Body of pancreas (tissue), 4 donors: ENCODE measurements at regions of chr15 and their contacts with region 1.

Region 1: DNA sequence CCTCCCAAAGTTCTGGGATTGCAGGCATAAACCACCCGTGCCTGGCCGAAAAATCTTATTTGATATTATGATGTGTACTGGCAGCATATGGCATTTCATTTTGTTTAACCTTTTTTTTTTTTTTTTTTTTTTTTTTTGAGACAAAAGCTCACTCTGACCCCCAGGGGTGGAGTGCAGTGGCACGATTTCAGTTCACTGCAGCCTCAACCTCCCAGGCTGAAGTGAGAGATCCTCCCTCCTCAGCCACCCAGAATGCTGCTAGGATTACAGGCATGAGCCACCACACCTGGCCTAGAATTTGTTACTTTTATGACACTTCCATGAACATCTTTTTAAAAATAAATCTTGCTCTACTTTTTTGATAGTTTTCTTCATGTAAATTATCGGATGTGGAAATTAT is 12.0 kb downstream of the TERB2 start:
- DNase-seq: no peak
- ATAC-seq: no peak
- H3K4me3 ChIP-seq: no peak overlapping the region
- H3K27ac ChIP-seq: no peak overlapping the region
- H3K4me1 ChIP-seq: no peaks in the 10 kb centered on the region
- H3K27me3 ChIP-seq: no peaks in the 10 kb centered on the region
- CTCF ChIP-seq: no peak
- POLR2A ChIP-seq: no peak

Region 2: GRCh38 chr15:43105077-43105736 is 1863.3 kb before region 1 on chr15:
- intact Hi-C with region 1: no loop called
- DNase-seq: peak; percentile 58 to 77 (median 73)
- ATAC-seq: peak; percentile 80
- H3K4me3 ChIP-seq: peak overlapping the region; percentile 42 to 58
- H3K27ac ChIP-seq: peak overlapping the region; percentile 82 to 88 (median 85)
- H3K4me1 ChIP-seq: peaks cover 25% of the 10 kb centered on the region
- H3K27me3 ChIP-seq: no peaks in the 10 kb centered on the region
- CTCF ChIP-seq: peak in 4 of 7 experiments; percentile 20 to 34 (median 30)
- POLR2A ChIP-seq: no peak

Region 3: DNA sequence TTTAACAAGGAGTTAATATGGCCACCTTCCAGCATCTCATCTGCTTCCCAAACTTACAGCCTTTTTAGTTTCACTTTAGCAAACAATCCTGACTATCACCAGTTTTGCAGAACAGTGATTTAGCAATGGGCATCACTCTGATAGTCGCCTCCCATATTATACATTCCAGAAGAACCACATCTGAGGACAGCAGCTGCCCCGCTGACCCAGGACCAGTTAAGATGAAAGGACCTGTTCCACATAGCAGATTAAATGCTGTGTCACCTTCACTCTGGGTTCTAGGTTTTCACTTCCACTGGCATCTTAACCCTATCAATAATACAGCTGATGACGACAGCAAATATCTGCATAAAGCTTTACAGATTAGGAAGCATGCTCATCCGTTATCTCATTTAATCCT is 132.4 kb before region 1 on chr15:
- intact Hi-C with region 1: no loop called
- DNase-seq: no peak
- ATAC-seq: no peak
- H3K4me3 ChIP-seq: no peak overlapping the region
- H3K27ac ChIP-seq: no peak overlapping the region
- H3K4me1 ChIP-seq: peaks cover 18% of the 10 kb centered on the region
- H3K27me3 ChIP-seq: no peaks in the 10 kb centered on the region
- CTCF ChIP-seq: no peak
- POLR2A ChIP-seq: no peak

Region 4: GRCh38 chr15:45030743-45031142 is 62.3 kb after region 1 on chr15:
- intact Hi-C with region 1: loop called (anchors 10 kb)
- DNase-seq: no peak
- ATAC-seq: no peak
- H3K4me3 ChIP-seq: no peak overlapping the region
- H3K27ac ChIP-seq: no peak overlapping the region
- H3K4me1 ChIP-seq: no peaks in the 10 kb centered on the region
- H3K27me3 ChIP-seq: no peaks in the 10 kb centered on the region
- CTCF ChIP-seq: no peak
- POLR2A ChIP-seq: no peak